ENCODE measurements at regions of chr3 and their contacts with region 1.

Region 1: DNA sequence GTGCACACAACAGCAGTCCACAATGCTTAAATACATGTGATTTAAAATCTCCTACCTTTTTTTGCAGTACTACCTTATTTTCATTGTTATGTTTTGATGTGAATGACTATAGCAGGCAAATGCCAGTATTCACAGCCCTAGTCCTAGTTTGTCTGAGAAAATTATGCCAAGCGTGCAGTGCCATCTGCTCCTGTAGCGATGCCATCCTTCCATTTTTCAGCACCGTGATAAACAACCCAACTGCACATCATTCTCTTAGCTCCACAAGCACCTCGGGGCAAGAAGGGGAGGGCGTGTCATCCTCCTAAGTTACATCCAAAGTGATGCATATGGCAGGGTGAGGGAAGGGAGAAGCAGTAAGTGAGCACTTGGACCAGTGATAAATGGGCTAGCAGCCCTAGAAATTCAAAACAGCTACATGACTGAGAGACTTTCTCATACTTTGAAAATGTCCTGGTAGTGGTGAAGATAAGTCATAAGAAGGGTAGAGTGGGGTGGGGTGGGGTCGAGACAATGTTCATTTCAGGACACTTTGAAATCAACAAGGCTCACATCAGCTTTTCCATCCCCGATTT is 198.8 kb downstream of the LSAMP start:
- DNase-seq: no peak
- ATAC-seq: no peak
- H3K4me3 ChIP-seq: no peak overlapping the region
- H3K27ac ChIP-seq: no peak overlapping the region
- H3K4me1 ChIP-seq: no peaks in the 10 kb centered on the region
- H3K27me3 ChIP-seq: no peaks in the 10 kb centered on the region
- CTCF ChIP-seq: no peak
- EP300 ChIP-seq: no peak
- POLR2A ChIP-seq: no peak
- RAD21 ChIP-seq: no peak

Region 2: DNA sequence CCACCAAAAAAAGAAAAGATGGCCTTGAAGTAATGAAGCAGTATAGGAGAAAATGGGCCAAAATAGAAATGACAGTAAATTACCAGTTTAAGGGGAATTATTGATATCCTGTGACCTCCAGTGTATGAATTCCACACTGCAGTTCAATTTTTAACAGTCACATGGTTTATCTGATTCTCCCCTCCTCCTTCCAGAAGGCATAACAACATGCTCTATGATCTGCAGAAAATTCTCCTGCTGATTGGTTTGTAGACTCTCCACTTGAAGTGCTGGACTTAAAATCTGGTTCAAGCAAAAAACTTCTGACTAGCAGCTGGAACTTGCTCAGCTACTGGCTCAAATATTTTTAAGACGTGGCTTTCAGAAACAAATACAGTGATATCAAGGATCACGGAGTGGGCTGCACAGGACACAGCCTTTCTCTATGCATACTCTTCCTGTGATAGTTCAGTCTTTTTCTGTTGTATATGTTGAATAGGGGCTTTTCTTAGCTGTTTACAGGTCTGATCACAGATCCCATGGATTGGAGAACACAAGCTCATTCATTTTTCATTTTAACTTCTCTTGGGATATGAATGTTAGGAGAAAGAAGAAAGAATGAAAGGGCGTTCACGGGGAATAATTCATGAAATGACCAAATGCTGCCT is 12.7 kb before region 1 on chr3:
- CTCF ChIA-PET with region 1: no interaction called
- POLR2A ChIA-PET with region 1: interaction called, 3 read pairs
- RAD21 ChIA-PET with region 1: interaction called, 6 read pairs
- SMC1A ChIA-PET with region 1: interaction called, 19 read pairs
- in situ Hi-C with region 1: no loop called
- intact Hi-C with region 1: no loop called
- DNase-seq: no peak
- ATAC-seq: no peak
- H3K4me3 ChIP-seq: no peak overlapping the region
- H3K27ac ChIP-seq: no peak overlapping the region
- H3K4me1 ChIP-seq: no peaks in the 10 kb centered on the region
- H3K27me3 ChIP-seq: no peaks in the 10 kb centered on the region
- CTCF ChIP-seq: no peak
- EP300 ChIP-seq: no peak
- POLR2A ChIP-seq: no peak
- RAD21 ChIP-seq: no peak

Region 3: GRCh38 chr3:116288485-116288884 is 42.0 kb after region 1 on chr3:
- CTCF ChIA-PET with region 1: no interaction called
- POLR2A ChIA-PET with region 1: no interaction called
- RAD21 ChIA-PET with region 1: no interaction called
- SMC1A ChIA-PET with region 1: no interaction called
- in situ Hi-C with region 1: no loop called
- intact Hi-C with region 1: no loop called
- DNase-seq: peak; percentile 34
- ATAC-seq: peak; percentile 87
- H3K4me3 ChIP-seq: no peak overlapping the region
- H3K27ac ChIP-seq: no peak overlapping the region
- H3K4me1 ChIP-seq: no peaks in the 10 kb centered on the region
- H3K27me3 ChIP-seq: no peaks in the 10 kb centered on the region; a peak in 1 of 4 replicates
- CTCF ChIP-seq: no peak
- EP300 ChIP-seq: peak; percentile 47 to 60; a peak in 2 of 4 replicates
- POLR2A ChIP-seq: no peak
- RAD21 ChIP-seq: no peak

Measured in GM12878 (cell line).